Posterior vena cava (tissue), 2 donors: ENCODE measurements at regions of chr9 and their contacts with region 1.

Region 1: GRCh38 chr9:124270504-124271335 is 13.0 kb downstream of the NEK6 start:
- DNase-seq: no peak

Region 2: GRCh38 chr9:124239249-124240073 is 31.3 kb before region 1 on chr9:
- intact Hi-C with region 1: loop called in 1 of 2 experiments (anchors 1 kb)
- DNase-seq: peak; percentile 48